Caco-2 (cell line): ENCODE measurements at regions of chr19 and their contacts with region 1.

Region 1: DNA sequence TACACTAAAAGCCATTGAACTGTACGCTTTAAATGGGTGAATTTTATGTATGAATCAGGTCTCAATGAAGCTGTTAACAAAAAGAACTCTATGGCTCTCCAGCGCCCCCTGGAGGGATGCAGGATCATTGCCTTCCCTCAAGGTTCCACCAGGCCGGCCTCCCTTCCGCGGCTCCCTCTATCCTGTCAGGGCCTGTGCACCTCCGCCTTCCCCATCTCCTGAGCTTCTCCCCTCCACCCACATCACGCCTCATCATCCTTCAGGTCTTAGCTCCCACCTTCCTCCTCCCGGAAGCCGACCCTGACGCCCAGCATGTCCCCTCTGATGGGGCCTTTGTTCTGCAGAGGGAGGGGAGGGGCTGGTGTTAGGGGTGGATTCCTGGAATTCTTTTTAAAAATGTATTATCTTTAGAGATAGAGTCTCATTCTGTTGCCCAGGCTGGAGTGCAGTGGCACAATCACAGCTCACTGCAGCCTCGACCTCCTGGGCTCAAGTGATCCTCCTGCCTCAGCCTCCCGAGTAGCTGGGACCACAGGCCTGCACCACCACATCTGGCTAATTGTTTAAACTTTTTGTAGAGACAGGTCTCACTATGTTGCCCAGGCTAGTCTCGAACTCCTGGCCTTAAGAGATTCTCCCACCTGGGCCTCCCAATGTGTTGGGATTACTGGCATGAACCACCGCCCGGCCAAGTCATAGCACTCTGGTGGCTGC is 27.7 kb downstream of the MEIS3 start:
- DNase-seq: peak; percentile 71 to 84
- H3K4me3 ChIP-seq: no peak overlapping the region
- H3K4me3 Mint-ChIP-seq: peak overlapping the region; percentile 34
- H3K27ac Mint-ChIP-seq: no peak overlapping the region
- H3K4me1 ChIP-seq: no peaks in the 10 kb centered on the region
- H3K4me1 Mint-ChIP-seq: no peaks in the 10 kb centered on the region
- H3K27me3 ChIP-seq: no peaks in the 10 kb centered on the region
- H3K27me3 Mint-ChIP-seq: peaks cover 6% of the 10 kb centered on the region
- CTCF ChIP-seq: peak; percentile 89 to 92

Region 2: DNA sequence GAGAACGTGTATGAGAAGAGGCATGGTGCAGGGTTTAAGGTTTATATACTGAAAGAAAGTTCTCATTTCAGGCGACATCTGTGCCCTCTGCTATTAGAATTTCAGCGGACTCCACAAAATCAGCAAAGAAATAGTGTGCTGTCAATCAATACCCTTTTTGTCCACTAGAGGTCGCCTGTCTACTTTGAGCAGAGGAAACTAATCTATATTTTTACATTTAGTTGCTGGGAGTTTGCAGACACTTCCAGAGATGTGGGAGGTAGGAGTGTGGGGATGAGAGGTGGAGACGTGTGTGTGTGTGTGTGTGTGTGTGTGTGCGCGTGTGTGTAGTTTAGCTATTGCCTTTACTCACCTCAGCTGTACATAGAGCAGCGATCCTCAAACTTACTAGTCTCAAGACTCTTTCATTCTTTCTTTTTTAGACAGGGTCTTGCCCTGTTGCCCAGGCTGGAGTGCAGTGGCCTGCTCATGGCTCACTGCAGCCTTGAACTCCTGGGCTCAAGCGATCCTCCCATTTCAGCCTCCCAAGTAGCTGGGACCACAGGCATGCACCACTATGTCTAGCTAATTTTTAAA is 107.3 kb before region 1 on chr19:
- CTCF ChIA-PET with region 1: no interaction called
- POLR2A ChIA-PET with region 1: no interaction called
- intact Hi-C with region 1: loop called (anchors 1 kb)
- DNase-seq: peak in 1 of 2 experiments; percentile 78
- H3K4me3 ChIP-seq: no peak overlapping the region
- H3K4me3 Mint-ChIP-seq: no peak overlapping the region
- H3K27ac Mint-ChIP-seq: no peak overlapping the region
- H3K4me1 ChIP-seq: peaks cover 10% of the 10 kb centered on the region
- H3K4me1 Mint-ChIP-seq: peaks cover 14% of the 10 kb centered on the region
- H3K27me3 ChIP-seq: no peaks in the 10 kb centered on the region
- H3K27me3 Mint-ChIP-seq: no peaks in the 10 kb centered on the region
- CTCF ChIP-seq: peak; percentile 66 to 83

Region 3: DNA sequence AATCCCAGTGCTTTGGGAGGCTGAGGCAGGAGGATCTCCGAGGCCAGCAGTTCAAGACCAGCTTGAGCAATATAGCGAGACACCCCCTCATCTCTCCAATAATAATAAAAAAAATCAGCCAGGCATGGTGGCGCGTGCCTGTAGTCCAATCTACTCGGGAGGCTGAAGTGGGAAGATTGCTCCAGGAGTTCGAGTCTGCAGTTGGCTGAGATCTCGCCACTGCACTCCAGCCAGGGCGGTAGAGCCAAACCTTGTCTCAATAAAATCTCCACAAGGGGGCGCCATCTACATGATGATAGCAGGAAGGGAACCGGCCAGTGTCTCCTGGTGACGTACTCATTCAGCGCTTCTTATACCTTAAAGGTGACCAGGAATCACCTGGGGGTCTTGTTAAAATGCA is 95.6 kb before region 1 on chr19:
- CTCF ChIA-PET with region 1: interaction called, 3 read pairs
- POLR2A ChIA-PET with region 1: no interaction called
- intact Hi-C with region 1: loop called (anchors 1 kb)
- DNase-seq: peak; percentile 89 to 92
- H3K4me3 ChIP-seq: no peak overlapping the region
- H3K4me3 Mint-ChIP-seq: no peak overlapping the region
- H3K27ac Mint-ChIP-seq: peak overlapping the region; percentile 64
- H3K4me1 ChIP-seq: no peaks in the 10 kb centered on the region
- H3K4me1 Mint-ChIP-seq: peaks cover 7% of the 10 kb centered on the region
- H3K27me3 ChIP-seq: no peaks in the 10 kb centered on the region
- H3K27me3 Mint-ChIP-seq: no peaks in the 10 kb centered on the region
- CTCF ChIP-seq: peak; percentile 78 to 89

Region 4: DNA sequence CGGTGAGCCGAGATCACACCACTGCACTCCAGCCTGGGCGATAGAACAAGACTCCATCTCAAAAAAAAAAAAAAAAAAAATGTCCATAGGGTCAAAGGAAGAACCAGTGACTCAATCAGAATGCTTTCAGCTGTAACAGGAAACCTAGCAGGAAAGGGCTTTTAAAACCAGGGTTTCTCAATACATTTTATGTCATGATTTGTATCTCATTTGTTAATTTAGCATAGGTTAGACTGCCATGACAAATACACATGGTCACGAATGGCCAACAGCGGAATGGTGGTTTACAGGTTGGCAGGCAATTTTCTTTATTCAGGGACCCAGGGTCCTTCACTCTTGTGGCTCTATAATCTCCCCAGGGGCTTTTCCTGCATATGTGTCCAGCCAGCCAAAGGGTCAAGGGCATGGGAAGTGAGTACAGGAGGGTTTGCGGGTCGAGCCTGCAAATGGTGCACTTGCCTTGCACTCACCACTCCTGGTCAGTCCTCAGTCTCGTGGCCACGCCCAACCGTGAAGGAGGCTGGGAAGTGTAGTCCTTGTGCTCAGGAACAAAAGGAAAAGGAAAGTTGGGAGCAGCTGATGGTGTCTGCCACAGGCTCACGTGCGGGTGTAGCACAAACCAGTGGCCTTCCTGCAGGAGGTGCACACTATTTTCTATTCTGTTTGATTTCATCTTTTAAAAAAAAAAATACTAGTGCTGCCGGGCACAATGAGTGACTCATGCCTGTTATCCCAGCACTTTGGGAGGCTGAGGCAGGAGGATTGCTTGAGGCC is 27.7 kb before region 1 on chr19:
- CTCF ChIA-PET with region 1: no interaction called
- POLR2A ChIA-PET with region 1: no interaction called
- intact Hi-C with region 1: no loop called
- DNase-seq: peak in 1 of 2 experiments; percentile 25
- H3K4me3 ChIP-seq: no peak overlapping the region
- H3K4me3 Mint-ChIP-seq: no peak overlapping the region
- H3K27ac Mint-ChIP-seq: no peak overlapping the region
- H3K4me1 ChIP-seq: no peaks in the 10 kb centered on the region
- H3K4me1 Mint-ChIP-seq: no peaks in the 10 kb centered on the region
- H3K27me3 ChIP-seq: no peaks in the 10 kb centered on the region
- H3K27me3 Mint-ChIP-seq: no peaks in the 10 kb centered on the region
- CTCF ChIP-seq: no peak